ENCODE measurements at regions of chr22 and their contacts with region 1.

Region 1: DNA sequence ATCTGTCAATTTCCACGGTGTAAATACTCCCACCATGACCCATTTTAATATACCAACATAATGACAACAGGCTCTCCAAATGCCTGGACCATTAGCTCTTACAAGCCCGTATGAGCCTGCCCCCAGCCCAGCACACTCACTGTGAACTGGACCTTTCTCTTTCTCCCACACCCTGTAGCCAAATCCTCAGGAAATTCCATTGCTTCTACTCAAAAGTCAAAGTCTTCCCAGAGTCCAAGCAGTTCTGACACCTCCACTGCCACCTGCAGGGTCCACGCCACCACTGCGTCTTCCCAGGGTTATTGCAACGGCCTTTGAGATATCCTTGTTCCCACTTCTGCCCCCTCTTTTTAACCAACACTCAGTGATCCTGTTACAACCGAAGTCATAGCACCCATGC is 110.1 kb upstream of the ASPHD2 start:
- DNase-seq: no peak
- ATAC-seq: no peak
- H3K4me3 ChIP-seq: no peak overlapping the region
- H3K27ac ChIP-seq: no peak overlapping the region
- H3K4me1 ChIP-seq: no peaks in the 10 kb centered on the region
- CTCF ChIP-seq: no peak
- EP300 ChIP-seq: no peak
- POLR2A ChIP-seq: no peak
- RAD21 ChIP-seq: no peak

Region 2: GRCh38 chr22:26330966-26331625 is 12.1 kb after region 1 on chr22:
- CTCF ChIA-PET with region 1: interaction called, 27 read pairs
- POLR2A ChIA-PET with region 1: no interaction called
- DNase-seq: peak; percentile 44 to 45
- ATAC-seq: peak; percentile 69 to 87; a peak in 5 of 6 replicates
- H3K4me3 ChIP-seq: no peak overlapping the region
- H3K27ac ChIP-seq: no peak overlapping the region
- H3K4me1 ChIP-seq: no peaks in the 10 kb centered on the region
- CTCF ChIP-seq: peak; percentile 65
- EP300 ChIP-seq: no peak
- POLR2A ChIP-seq: no peak
- RAD21 ChIP-seq: peak; percentile 78 to 88